ENCODE measurements at regions of chr1 and their contacts with region 1.

Region 1: DNA sequence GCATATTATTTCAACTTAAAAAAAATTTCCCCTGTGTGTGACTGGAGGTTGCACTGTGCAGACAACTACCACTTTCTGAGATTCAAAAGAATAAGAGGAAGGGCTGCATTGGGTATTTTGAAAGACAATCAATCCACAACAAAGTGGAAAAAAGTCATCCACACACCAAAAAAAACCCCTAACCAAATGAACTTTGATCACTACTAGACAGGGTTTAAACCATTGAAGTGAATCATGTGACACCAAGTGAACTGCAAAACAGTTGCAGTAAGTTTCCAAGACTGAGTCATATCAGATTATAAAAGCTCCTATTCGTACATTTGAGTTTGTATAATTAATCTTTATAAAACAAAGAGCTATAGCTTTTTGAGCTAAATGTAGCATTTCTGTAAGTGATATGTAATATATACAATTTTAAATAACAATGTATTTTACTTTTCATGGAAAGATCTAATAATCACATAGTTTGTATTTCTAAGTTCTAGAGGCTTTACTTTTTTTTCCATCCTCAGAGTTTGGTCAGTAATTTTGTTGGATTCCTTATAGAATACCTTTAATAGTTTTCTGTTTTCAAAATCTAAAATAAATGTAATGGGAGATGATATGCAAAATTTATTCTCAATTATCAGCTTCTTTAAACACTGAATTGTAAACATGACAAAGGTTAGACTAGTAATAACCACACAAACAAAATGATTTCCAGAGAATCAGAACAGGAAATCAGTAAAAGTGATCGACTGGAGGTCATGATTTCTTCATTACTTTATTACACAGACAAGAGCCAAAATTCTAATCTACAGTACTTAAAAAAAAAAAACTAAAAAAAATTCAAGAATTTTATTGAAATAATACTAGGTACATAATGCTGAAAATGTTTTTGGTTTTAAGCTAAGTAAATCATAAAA is 50.5 kb upstream of the GFI1 start:
- DNase-seq: no peak
- H3K4me3 Mint-ChIP-seq: peak overlapping the region; percentile 54
- H3K27ac Mint-ChIP-seq: peak overlapping the region; percentile 98
- H3K4me1 Mint-ChIP-seq: peaks cover 86% of the 10 kb centered on the region
- H3K27me3 Mint-ChIP-seq: no peaks in the 10 kb centered on the region

Region 2: GRCh38 chr1:91374086-91374485 is 1163.1 kb before region 1 on chr1:
- CTCF ChIA-PET with region 1: no interaction called
- POLR2A ChIA-PET with region 1: no interaction called
- intact Hi-C with region 1: no loop called
- DNase-seq: no peak
- H3K4me3 Mint-ChIP-seq: no peak overlapping the region
- H3K27ac Mint-ChIP-seq: no peak overlapping the region
- H3K4me1 Mint-ChIP-seq: no peaks in the 10 kb centered on the region
- H3K27me3 Mint-ChIP-seq: no peaks in the 10 kb centered on the region

Region 3: DNA sequence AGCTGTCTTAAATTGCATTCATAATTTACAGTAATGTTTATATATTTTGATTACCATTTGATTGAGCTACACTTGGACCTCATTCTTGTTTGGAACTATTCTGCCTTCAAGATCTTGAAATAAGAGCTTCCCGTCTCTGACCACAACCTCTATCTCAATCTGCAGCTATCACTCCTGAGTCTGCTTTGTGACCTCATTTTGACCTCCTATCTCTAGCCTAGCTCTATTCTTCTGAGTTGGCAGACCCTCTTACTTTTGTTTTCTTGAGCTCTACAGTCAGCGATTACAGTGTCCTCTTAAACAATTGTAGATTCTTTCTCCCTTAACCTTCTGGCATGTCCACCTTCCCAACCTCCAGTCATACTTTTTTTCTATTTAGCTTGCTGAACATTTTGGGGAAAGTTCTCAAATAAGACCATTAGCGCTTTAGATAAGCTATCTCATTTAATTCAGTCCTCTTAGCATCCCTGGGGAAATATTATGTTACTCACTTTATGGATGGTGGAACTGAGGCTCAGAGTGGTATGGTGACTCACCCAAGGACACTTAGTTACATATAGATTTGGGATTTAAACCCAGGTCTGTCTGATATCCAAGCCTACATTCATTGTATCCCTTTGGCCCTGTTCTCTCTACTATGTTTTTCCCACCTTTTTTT is 219.3 kb before region 1 on chr1:
- CTCF ChIA-PET with region 1: interaction called, 5 read pairs
- POLR2A ChIA-PET with region 1: interaction called, 9 read pairs
- intact Hi-C with region 1: loop called (anchors 1 kb)
- DNase-seq: no peak
- H3K4me3 Mint-ChIP-seq: peak overlapping the region; percentile 3
- H3K27ac Mint-ChIP-seq: peak overlapping the region; percentile 63
- H3K4me1 Mint-ChIP-seq: peaks cover 59% of the 10 kb centered on the region
- H3K27me3 Mint-ChIP-seq: no peaks in the 10 kb centered on the region

Region 4: GRCh38 chr1:92476071-92476631 is 61.1 kb before region 1 on chr1:
- CTCF ChIA-PET with region 1: interaction called, 13 read pairs
- POLR2A ChIA-PET with region 1: interaction called, 154 read pairs
- intact Hi-C with region 1: loop called (anchors 1 kb)
- DNase-seq: peak; percentile 85
- H3K4me3 Mint-ChIP-seq: peak overlapping the region; percentile 54
- H3K27ac Mint-ChIP-seq: peak overlapping the region; percentile 86
- H3K4me1 Mint-ChIP-seq: peaks cover 87% of the 10 kb centered on the region
- H3K27me3 Mint-ChIP-seq: no peaks in the 10 kb centered on the region

Region 5: DNA sequence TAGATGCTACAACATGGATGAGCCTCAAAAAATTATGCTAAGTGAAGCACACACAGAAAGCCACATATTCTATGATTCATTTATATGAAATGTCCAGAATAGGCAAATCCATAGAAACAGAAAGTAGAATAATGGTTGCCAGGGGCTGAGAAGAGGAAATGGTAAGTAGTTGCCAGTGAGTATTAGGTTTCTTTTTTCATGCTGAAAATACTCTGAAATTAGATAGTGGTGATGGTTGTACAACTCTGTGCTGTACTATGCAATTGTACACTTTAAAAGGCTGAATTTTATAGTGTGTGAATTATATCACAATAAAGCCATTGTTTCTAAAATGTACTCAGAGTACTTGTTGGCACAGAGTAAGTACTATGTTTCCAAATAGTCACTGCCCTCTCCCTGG is 35.0 kb before region 1 on chr1:
- CTCF ChIA-PET with region 1: no interaction called
- POLR2A ChIA-PET with region 1: interaction called, 3 read pairs
- intact Hi-C with region 1: loop called (anchors 1 kb)
- DNase-seq: no peak
- H3K4me3 Mint-ChIP-seq: no peak overlapping the region
- H3K27ac Mint-ChIP-seq: peak overlapping the region; percentile 42
- H3K4me1 Mint-ChIP-seq: peaks cover 36% of the 10 kb centered on the region
- H3K27me3 Mint-ChIP-seq: no peaks in the 10 kb centered on the region

Region 6: DNA sequence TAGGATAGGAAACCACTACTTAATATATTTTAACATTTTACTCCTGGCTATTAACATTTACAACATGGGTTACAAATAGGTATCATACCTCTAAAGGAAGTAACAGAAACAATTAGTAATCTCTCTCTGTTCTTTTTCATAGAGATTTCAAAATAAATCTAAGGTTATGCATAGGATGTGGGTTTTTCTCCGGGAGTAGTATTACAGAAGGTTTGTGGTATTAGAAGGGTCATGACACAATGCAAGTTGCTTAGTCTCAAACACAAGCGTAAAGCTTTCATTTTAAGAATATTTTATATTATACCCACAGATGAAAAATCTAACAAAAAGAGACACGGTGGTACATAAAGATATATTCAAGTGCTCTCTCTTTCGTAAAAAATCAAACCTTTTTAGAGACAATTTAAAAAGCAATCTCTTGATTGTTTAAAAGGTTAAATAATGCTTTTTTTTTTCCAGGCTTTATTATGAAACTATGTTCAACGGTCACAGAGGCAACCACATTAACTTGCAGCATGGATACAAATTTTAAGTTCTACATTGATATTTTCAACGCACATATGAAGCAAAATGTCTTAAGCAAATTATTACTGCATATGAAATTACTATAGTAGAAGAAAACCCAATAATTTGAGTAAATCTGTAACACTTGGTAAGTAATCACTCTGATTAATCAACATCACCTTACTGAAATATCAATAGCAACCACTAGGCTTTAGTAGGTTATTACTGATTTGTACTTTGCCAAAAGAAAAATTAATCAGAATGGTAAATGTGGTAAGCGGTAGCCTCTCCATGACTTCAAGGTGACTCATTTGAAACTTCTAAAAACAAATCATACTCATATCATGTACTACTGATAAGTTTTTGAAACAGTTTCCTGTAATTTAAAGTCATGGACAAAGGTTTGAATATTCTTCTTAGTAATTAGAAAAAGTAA is 46.9 kb after region 1 on chr1:
- CTCF ChIA-PET with region 1: interaction called, 17 read pairs
- POLR2A ChIA-PET with region 1: interaction called, 38 read pairs
- intact Hi-C with region 1: loop called (anchors 1 kb)
- DNase-seq: no peak
- H3K4me3 Mint-ChIP-seq: peak overlapping the region; percentile 65
- H3K27ac Mint-ChIP-seq: peak overlapping the region; percentile 92
- H3K4me1 Mint-ChIP-seq: peaks cover 64% of the 10 kb centered on the region
- H3K27me3 Mint-ChIP-seq: no peaks in the 10 kb centered on the region

Region 7: GRCh38 chr1:93179886-93180722 is 642.9 kb after region 1 on chr1 and contains the start of gene TMED5:
- CTCF ChIA-PET with region 1: no interaction called
- POLR2A ChIA-PET with region 1: no interaction called
- intact Hi-C with region 1: no loop called
- DNase-seq: peak; percentile 98
- H3K4me3 Mint-ChIP-seq: peak within 1 kb of the TSS; percentile 88
- H3K27ac Mint-ChIP-seq: peak within 1 kb of the TSS; percentile 97
- H3K4me1 Mint-ChIP-seq: peaks cover 57% of the 10 kb centered on the region
- H3K27me3 Mint-ChIP-seq: no peaks in the 10 kb centered on the region
- total RNA-seq, gene TMED5: 47.0 to 49.2 TPM

Measured in activated CD4-positive, alpha-beta memory T cell treated with anti-CD3 and anti-CD28 coated beads for 36 hours (primary cell).